Aorta (tissue), 5 donors: ENCODE measurements at regions of chr17 and their contacts with region 1.

Region 1: DNA sequence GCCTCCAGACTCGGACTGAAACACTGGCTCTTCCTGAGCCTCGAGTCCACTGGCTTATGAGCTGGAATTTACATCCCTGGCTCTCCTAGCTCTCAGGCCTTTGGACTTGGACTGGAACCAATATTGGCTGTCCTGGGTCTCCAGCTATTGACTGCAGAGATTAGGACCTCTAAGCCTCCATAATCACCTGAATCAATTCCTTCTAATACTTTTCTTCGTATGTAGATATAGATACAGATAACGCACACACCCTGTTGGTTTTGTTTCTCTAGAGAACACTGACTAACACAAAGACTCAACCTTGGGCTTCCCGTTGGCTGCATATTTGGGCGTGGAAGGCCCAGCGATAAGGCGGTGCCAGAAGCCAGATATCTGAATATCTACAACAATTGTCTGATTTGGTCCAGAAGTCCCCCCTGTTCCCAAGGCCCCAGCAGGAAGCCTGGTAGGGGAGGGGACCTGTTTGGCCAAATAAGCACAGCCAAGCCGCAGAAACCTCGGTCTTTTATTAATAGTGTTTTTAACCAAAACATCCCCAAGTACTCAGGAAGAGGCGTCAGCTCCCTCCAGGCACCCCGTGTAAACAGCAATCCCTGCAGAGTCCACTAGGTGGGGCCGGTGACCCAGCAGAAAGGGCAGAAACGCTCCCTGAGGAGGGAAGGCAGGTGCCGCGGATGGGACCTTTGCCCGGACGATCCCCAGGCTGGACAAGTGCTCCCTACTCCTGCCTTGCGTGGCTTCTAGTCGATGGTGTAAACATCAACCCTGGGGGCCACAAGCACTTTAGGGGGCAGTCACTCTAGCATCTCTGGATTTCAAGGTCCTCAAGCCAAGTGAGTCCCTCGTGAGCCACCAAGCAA is 57.0 kb downstream of the ABR start:
- DNase-seq: peak; percentile 88 to 94
- ATAC-seq: peak; percentile 91
- H3K4me3 ChIP-seq: no peak overlapping the region
- H3K27ac ChIP-seq: no peak overlapping the region
- H3K4me1 ChIP-seq: no peaks in the 10 kb centered on the region
- H3K27me3 ChIP-seq: no peaks in the 10 kb centered on the region

Region 2: GRCh38 chr17:1147661-1148060 is 24.9 kb after region 1 on chr17:
- intact Hi-C with region 1: loop called (anchors 2 kb)
- DNase-seq: no peak
- ATAC-seq: peak; percentile 11
- H3K4me3 ChIP-seq: no peak overlapping the region
- H3K27ac ChIP-seq: no peak overlapping the region
- H3K4me1 ChIP-seq: no peaks in the 10 kb centered on the region
- H3K27me3 ChIP-seq: no peaks in the 10 kb centered on the region

Region 3: GRCh38 chr17:1186923-1187771 is 64.4 kb after region 1 on chr17:
- intact Hi-C with region 1: loop called (anchors 2 to 5 kb)
- DNase-seq: peak; percentile 91 to 94
- ATAC-seq: peak; percentile 95
- H3K4me3 ChIP-seq: no peak overlapping the region
- H3K27ac ChIP-seq: peak overlapping the region in 1 of 2 donors; percentile 22
- H3K4me1 ChIP-seq: peaks cover 0 to 3% of the 10 kb centered on the region in 2 donors
- H3K27me3 ChIP-seq: no peaks in the 10 kb centered on the region